ENCODE measurements at regions of chr14 and their contacts with region 1.

Region 1: GRCh38 chr14:93527068-93527668 is 96.4 kb downstream of the UNC79 start:
- DNase-seq: no peak
- H3K4me3 Mint-ChIP-seq: no peak overlapping the region
- H3K27ac Mint-ChIP-seq: no peak overlapping the region
- H3K4me1 Mint-ChIP-seq: no peaks in the 10 kb centered on the region
- H3K27me3 Mint-ChIP-seq: peaks cover 28% of the 10 kb centered on the region
- CTCF ChIP-seq: no peak

Region 2: GRCh38 chr14:93346929-93347721 is 180.0 kb before region 1 on chr14 and contains the start of gene COX8C:
- CTCF ChIA-PET with region 1: no interaction called
- POLR2A ChIA-PET with region 1: no interaction called
- intact Hi-C with region 1: loop called (anchors 10 kb)
- DNase-seq: no peak
- H3K4me3 Mint-ChIP-seq: no peak within 1 kb of the TSS
- H3K27ac Mint-ChIP-seq: no peak within 1 kb of the TSS
- H3K4me1 Mint-ChIP-seq: no peaks in the 10 kb centered on the region
- H3K27me3 Mint-ChIP-seq: no peaks in the 10 kb centered on the region
- CTCF ChIP-seq: no peak
- total RNA-seq, gene COX8C: not detected in 2 replicates

Region 3: GRCh38 chr14:93464271-93464670 is 62.9 kb before region 1 on chr14:
- CTCF ChIA-PET with region 1: no interaction called
- POLR2A ChIA-PET with region 1: no interaction called
- intact Hi-C with region 1: no loop called
- DNase-seq: no peak
- H3K4me3 Mint-ChIP-seq: no peak overlapping the region
- H3K27ac Mint-ChIP-seq: no peak overlapping the region
- H3K4me1 Mint-ChIP-seq: no peaks in the 10 kb centered on the region
- H3K27me3 Mint-ChIP-seq: peaks cover 40% of the 10 kb centered on the region
- CTCF ChIP-seq: no peak